PC-9 (cell line): ENCODE measurements at regions of chr1 and their contacts with region 1.

Region 1: DNA sequence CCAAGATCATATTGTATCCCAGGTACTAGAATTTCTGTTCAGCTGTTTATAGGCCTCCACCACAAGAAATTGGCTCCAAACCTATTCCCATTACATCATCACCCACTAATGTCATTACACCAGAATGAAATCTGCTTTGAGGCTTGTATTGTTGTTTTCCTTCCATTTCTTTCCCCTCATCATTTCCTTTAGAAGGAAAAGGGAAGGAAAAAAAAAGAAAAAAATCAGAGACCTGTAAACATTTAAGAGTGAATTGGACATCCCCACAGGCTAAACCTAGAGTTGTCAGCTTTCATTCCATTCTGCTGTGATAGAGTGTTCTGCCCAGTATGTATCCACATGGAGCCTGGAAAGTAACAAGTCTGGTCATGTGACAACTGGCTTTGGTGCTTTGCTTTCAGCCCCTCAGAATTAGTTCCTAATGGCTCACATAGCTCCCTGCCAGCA is 44.6 kb downstream of the NFYC start:
- DNase-seq: no peak
- H3K4me3 ChIP-seq: no peak overlapping the region
- H3K27ac ChIP-seq: no peak overlapping the region
- H3K4me1 ChIP-seq: no peaks in the 10 kb centered on the region
- H3K27me3 ChIP-seq: no peaks in the 10 kb centered on the region
- CTCF ChIP-seq: no peak

Region 2: GRCh38 chr1:40640314-40641076 is 95.6 kb before region 1 on chr1:
- CTCF ChIA-PET with region 1: no interaction called
- POLR2A ChIA-PET with region 1: interaction called, 19 read pairs
- intact Hi-C with region 1: no loop called
- DNase-seq: no peak
- H3K4me3 ChIP-seq: no peak overlapping the region
- H3K27ac ChIP-seq: no peak overlapping the region
- H3K4me1 ChIP-seq: no peaks in the 10 kb centered on the region
- H3K27me3 ChIP-seq: no peaks in the 10 kb centered on the region
- CTCF ChIP-seq: no peak

Region 3: GRCh38 chr1:40697436-40697835 is 38.7 kb before region 1 on chr1:
- CTCF ChIA-PET with region 1: no interaction called
- POLR2A ChIA-PET with region 1: no interaction called
- intact Hi-C with region 1: no loop called
- DNase-seq: no peak
- H3K4me3 ChIP-seq: no peak overlapping the region
- H3K27ac ChIP-seq: no peak overlapping the region
- H3K4me1 ChIP-seq: peaks cover 15% of the 10 kb centered on the region
- H3K27me3 ChIP-seq: no peaks in the 10 kb centered on the region
- CTCF ChIP-seq: no peak